Activated CD4-positive, alpha-beta memory T cell treated with anti-CD3 and anti-CD28 coated beads for 36 hours (primary cell): ENCODE measurements at regions of chr13 and their contacts with region 1.

Region 1: GRCh38 chr13:31161828-31162590 is at the start of gene HSPH1:
- DNase-seq: peak; percentile 99
- H3K4me3 Mint-ChIP-seq: peak within 1 kb of the TSS; percentile 92
- H3K27ac Mint-ChIP-seq: peak within 1 kb of the TSS; percentile 99
- H3K4me1 Mint-ChIP-seq: peaks cover 35% of the 10 kb centered on the region
- H3K27me3 Mint-ChIP-seq: no peaks in the 10 kb centered on the region
- total RNA-seq, gene HSPH1: 214 to 221 TPM

Region 2: DNA sequence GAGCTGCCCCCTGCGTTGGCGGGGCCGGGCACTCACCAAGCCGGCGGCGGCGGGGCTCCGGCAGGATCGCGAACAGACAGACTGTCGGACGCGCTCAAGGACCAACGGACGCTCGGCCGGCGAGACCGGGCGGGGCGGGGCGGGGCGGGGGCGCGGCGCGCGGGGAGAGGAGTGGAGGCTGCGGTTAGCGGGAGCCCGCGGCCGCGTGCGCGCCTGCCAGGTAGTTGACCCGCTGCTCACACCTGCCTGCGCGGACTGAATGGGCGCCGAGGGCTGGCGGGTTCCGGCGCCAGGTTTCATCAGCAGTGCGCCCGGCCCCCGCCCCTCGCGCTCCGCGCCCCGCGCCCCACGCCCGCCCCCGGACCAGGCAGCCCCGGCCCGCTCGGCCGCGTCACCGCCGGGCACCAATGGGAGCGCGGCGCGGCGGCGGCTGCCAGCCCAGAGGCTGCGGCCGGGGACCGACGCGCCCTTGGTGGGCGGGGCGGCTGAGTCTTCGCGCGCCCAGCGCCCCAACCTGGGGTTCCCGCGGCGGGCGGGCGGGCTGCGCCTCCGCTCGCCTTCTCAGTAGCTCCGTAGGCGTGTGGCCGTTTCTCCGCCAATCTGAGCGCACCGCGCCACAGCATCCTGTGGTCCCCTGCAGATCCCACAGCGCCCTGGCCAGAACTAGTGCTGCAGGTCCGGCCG is 1566.5 kb before region 1 on chr13 and contains the start of gene SLC7A1:
- CTCF ChIA-PET with region 1: no interaction called
- POLR2A ChIA-PET with region 1: no interaction called
- intact Hi-C with region 1: loop called (anchors 10 kb)
- DNase-seq: peak; percentile 90
- H3K4me3 Mint-ChIP-seq: peak within 1 kb of the TSS; percentile 89
- H3K27ac Mint-ChIP-seq: peak within 1 kb of the TSS; percentile 97
- H3K4me1 Mint-ChIP-seq: peaks cover 45% of the 10 kb centered on the region
- H3K27me3 Mint-ChIP-seq: peaks cover 1% of the 10 kb centered on the region
- total RNA-seq, gene SLC7A1: 106 to 114 TPM

Region 3: GRCh38 chr13:31073859-31074718 is 87.9 kb before region 1 on chr13:
- CTCF ChIA-PET with region 1: no interaction called
- POLR2A ChIA-PET with region 1: interaction called, 6 read pairs
- intact Hi-C with region 1: loop called (anchors 1 kb)
- DNase-seq: peak; percentile 82
- H3K4me3 Mint-ChIP-seq: no peak overlapping the region
- H3K27ac Mint-ChIP-seq: peak overlapping the region; percentile 62
- H3K4me1 Mint-ChIP-seq: peaks cover 13% of the 10 kb centered on the region
- H3K27me3 Mint-ChIP-seq: peaks cover 9% of the 10 kb centered on the region

Region 4: DNA sequence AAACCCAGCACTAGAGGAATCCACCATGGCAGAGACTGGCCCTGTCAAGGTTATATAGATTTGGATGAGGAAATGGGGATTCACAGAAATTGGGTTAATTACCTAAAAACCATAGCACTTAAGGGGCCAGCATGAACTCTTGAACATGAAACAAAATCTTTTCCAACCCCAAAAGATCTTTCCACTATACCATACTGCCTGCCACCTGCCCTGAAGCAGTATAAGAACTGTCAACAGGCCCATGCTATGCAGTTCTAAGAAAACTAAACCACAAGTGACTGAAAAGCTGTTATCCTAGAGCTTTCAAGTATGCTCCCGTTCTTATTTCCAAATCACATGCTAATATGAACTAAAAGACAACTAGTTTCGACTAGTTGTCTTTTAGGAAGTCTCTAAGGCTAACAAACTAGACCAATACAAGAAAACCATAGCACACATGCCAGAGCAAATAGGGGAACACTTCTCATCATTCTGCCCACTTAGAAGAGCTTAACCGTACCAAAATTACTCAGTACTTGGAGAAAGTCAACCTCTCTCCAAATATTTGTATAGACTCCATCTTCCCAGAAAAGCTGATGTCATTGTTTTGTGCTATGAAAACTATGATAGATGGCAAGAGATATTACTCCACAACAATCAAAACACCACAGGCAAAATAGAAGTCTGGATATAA is 27.8 kb before region 1 on chr13:
- CTCF ChIA-PET with region 1: no interaction called
- POLR2A ChIA-PET with region 1: interaction called, 10 read pairs
- intact Hi-C with region 1: loop called (anchors 1 kb)
- DNase-seq: no peak
- H3K4me3 Mint-ChIP-seq: no peak overlapping the region
- H3K27ac Mint-ChIP-seq: peak overlapping the region; percentile 50
- H3K4me1 Mint-ChIP-seq: peaks cover 48% of the 10 kb centered on the region
- H3K27me3 Mint-ChIP-seq: no peaks in the 10 kb centered on the region